Motor neuron (in vitro differentiated cells): ENCODE measurements at regions of chr13 and their contacts with region 1.

Region 1: GRCh38 chr13:21458813-21459701 is at the start of gene ZDHHC20:
- ATAC-seq: peak; percentile 86 to 92 (median 89)
- H3K4me3 ChIP-seq: peak within 1 kb of the TSS; percentile 62 to 91 (median 73)
- H3K27ac ChIP-seq: peak within 1 kb of the TSS; percentile 71 to 80
- H3K4me1 ChIP-seq: peaks cover 11 to 12% of the 10 kb centered on the region in 2 donors
- total RNA-seq, gene ZDHHC20: 19.5 to 33.9 (median 26.3) TPM

Region 2: DNA sequence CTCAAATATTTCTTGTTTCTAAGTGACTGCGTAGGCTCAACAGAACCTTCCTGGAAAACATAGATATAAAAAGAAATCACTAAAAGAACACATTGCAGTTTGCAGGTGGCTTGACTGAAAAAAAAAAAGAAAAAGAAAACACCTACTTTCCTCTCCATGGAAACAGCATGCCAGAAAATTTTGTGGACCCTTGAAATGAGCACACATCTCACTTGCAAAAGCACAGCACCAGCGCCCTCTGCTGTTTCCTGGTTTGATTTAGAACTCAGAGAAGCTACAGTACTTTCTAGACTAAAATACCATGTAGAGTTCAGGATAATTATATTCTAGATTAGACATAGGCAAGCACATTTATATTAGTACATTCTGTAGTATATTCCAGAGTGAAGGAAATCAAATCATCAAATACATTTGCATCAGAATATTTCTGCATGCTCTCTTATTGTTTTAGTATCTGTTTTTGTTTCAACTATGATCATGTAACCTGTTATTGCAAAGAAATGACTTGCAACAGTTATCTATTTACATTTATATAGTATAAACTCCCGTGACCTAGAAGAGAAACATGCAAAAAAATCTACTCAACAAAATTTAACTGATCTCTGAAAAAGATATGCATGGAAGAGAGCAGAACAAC is 534.2 kb before region 1 on chr13:
- in situ Hi-C with region 1: loop called in 1 of 9 experiments (anchors 25 kb)
- ATAC-seq: peak; percentile 44 to 91 (median 66)
- H3K4me3 ChIP-seq: no peak overlapping the region
- H3K27ac ChIP-seq: no peak overlapping the region
- H3K4me1 ChIP-seq: no peaks in the 10 kb centered on the region

Region 3: GRCh38 chr13:21297914-21298831 is 160.9 kb before region 1 on chr13:
- in situ Hi-C with region 1: loop called in 3 of 9 experiments (anchors 10 to 25 kb)
- ATAC-seq: peak; percentile 92 to 96 (median 94)
- H3K4me3 ChIP-seq: peak overlapping the region; percentile 59 to 97 (median 80)
- H3K27ac ChIP-seq: peak overlapping the region; percentile 5 to 69
- H3K4me1 ChIP-seq: peaks cover 2 to 4% of the 10 kb centered on the region in 2 donors

Region 4: GRCh38 chr13:21318891-21319532 is 140.0 kb before region 1 on chr13:
- in situ Hi-C with region 1: loop called in 1 of 9 experiments (anchors 25 kb)
- ATAC-seq: no peak
- H3K4me3 ChIP-seq: no peak overlapping the region
- H3K27ac ChIP-seq: no peak overlapping the region
- H3K4me1 ChIP-seq: peaks cover 3 to 34% of the 10 kb centered on the region in 2 donors